ENCODE measurements at regions of chr7 and their contacts with region 1.

Region 1: DNA sequence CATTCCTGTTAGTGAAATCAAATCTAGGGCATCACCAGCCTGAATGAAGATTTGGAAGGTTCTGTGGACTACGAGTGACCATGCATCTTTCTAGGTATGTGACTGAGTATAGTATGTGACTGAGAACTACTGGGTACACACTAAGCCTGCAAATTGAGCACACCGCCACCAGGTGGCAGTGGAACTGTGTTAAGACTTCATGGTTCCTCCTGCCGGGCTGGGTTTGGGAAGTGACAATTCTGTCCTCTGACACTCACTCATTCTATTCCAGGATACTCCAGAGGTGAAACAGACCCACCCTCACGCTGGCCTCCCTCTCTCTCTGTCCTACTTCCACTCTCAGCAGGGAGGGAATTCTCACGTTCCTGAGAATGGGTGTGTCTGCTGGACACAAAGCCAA is 84.0 kb upstream of the TMEM248 start:
- DNase-seq: no peak
- H3K4me3 Mint-ChIP-seq: no peak overlapping the region
- H3K27ac Mint-ChIP-seq: no peak overlapping the region
- H3K4me1 Mint-ChIP-seq: no peaks in the 10 kb centered on the region
- H3K27me3 Mint-ChIP-seq: no peaks in the 10 kb centered on the region

Region 2: GRCh38 chr7:66847879-66848790 is 11.1 kb after region 1 on chr7:
- intact Hi-C with region 1: no loop called
- DNase-seq: no peak
- H3K4me3 Mint-ChIP-seq: no peak overlapping the region
- H3K27ac Mint-ChIP-seq: peak overlapping the region; percentile 86
- H3K4me1 Mint-ChIP-seq: peaks cover 20% of the 10 kb centered on the region
- H3K27me3 Mint-ChIP-seq: no peaks in the 10 kb centered on the region

Region 3: GRCh38 chr7:66894463-66895080 is 57.6 kb after region 1 on chr7:
- intact Hi-C with region 1: loop called (anchors 2 kb)
- DNase-seq: no peak
- H3K4me3 Mint-ChIP-seq: no peak overlapping the region
- H3K27ac Mint-ChIP-seq: no peak overlapping the region
- H3K4me1 Mint-ChIP-seq: no peaks in the 10 kb centered on the region
- H3K27me3 Mint-ChIP-seq: no peaks in the 10 kb centered on the region

Region 4: GRCh38 chr7:66905689-66906088 is 68.7 kb after region 1 on chr7:
- intact Hi-C with region 1: no loop called
- DNase-seq: no peak
- H3K4me3 Mint-ChIP-seq: no peak overlapping the region
- H3K27ac Mint-ChIP-seq: no peak overlapping the region
- H3K4me1 Mint-ChIP-seq: no peaks in the 10 kb centered on the region
- H3K27me3 Mint-ChIP-seq: no peaks in the 10 kb centered on the region

Region 5: GRCh38 chr7:67033251-67033650 is 196.2 kb after region 1 on chr7:
- intact Hi-C with region 1: no loop called
- DNase-seq: no peak
- H3K4me3 Mint-ChIP-seq: no peak overlapping the region
- H3K27ac Mint-ChIP-seq: no peak overlapping the region
- H3K4me1 Mint-ChIP-seq: no peaks in the 10 kb centered on the region
- H3K27me3 Mint-ChIP-seq: no peaks in the 10 kb centered on the region